Activated B cell treated with CpG ODN at 0.5 μM for 24 hours (primary cell): ENCODE measurements at regions of chr15 and their contacts with region 1.

Region 1: GRCh38 chr15:85475317-85475701 is 94.9 kb downstream of the AKAP13 start:
- DNase-seq: no peak
- ATAC-seq: peak; percentile 50
- H3K4me3 Mint-ChIP-seq: peak overlapping the region; percentile 65
- H3K27ac Mint-ChIP-seq: peak overlapping the region; percentile 82
- H3K4me1 Mint-ChIP-seq: peaks cover 92% of the 10 kb centered on the region
- H3K27me3 Mint-ChIP-seq: no peaks in the 10 kb centered on the region
- CTCF ChIP-seq: no peak

Region 2: DNA sequence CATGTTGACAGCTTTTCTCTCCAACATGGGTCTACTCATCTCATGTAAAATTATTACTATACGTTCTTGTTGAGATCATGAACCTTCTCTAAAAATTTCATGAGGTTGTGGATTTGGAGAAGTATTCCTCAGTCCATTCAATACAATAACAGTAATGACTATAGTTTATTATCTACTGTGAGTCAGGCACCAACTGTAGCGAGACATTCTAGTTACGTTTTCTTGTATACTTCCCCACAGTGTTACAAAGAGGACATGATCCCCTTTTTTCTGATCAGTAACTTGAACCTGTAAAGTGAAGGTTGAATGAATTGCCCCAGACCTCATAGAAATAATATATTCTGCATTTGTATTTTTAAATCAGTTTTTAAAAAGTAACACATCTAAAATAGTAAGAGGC is 18.5 kb before region 1 on chr15:
- CTCF ChIA-PET with region 1: no interaction called
- POLR2A ChIA-PET with region 1: interaction called, 8 read pairs
- intact Hi-C with region 1: loop called (anchors 2 kb)
- DNase-seq: no peak
- ATAC-seq: peak; percentile 69
- H3K4me3 Mint-ChIP-seq: no peak overlapping the region
- H3K27ac Mint-ChIP-seq: peak overlapping the region; percentile 88
- H3K4me1 Mint-ChIP-seq: peaks cover 90% of the 10 kb centered on the region
- H3K27me3 Mint-ChIP-seq: no peaks in the 10 kb centered on the region
- CTCF ChIP-seq: no peak

Region 3: GRCh38 chr15:85463276-85463892 is 11.9 kb before region 1 on chr15:
- CTCF ChIA-PET with region 1: no interaction called
- POLR2A ChIA-PET with region 1: interaction called, 3 read pairs
- intact Hi-C with region 1: loop called (anchors 1 kb)
- DNase-seq: no peak
- ATAC-seq: no peak
- H3K4me3 Mint-ChIP-seq: peak overlapping the region; percentile 12
- H3K27ac Mint-ChIP-seq: peak overlapping the region; percentile 51
- H3K4me1 Mint-ChIP-seq: peaks cover 73% of the 10 kb centered on the region
- H3K27me3 Mint-ChIP-seq: no peaks in the 10 kb centered on the region
- CTCF ChIP-seq: no peak